PC-9 (cell line): ENCODE measurements at regions of chr14 and their contacts with region 1.

Region 1: GRCh38 chr14:34403643-34404042 is 58.4 kb downstream of the SPTSSA start:
- DNase-seq: no peak
- H3K4me3 ChIP-seq: no peak overlapping the region
- H3K27ac ChIP-seq: no peak overlapping the region
- H3K4me1 ChIP-seq: no peaks in the 10 kb centered on the region
- H3K27me3 ChIP-seq: no peaks in the 10 kb centered on the region
- CTCF ChIP-seq: no peak

Region 2: DNA sequence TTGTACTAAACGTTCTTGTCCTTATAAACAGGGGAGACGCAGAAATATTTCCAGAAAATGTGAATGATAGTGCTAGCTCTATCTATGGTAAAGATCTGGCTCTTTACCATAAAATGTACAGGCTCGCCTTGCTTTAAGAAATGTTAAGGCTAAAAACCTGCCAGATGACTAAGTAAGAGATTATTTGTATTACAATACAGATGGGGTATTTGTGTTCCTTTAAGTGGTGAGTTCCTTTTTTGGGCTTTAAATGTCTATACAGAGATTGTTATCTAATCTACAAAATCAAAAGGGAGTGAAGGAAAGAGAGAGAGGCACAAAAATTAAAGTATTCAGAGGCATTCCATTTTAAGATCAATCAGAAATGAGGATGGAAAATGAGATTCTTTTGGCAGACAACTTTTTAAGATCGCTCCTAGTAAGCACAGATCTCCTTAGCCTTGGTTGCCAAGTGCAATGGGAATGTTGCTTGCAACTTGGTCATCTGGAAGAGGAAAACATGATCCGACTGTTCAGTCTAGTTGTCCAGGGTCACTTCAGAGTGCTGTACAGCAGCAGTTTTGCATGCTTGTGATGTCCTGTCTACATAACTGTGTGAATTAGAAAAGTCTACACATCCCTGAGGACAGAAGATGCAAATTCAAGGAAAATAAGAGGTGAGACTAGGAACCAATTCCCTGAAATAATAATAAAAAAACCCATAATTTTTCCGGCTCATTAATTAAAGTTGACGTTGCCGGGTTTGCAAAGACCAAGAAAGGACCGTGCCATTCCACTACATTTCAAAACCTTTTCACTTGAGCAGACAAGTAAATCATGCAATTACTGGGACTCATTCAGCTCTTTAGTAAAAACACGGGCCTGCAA is 833.6 kb before region 1 on chr14:
- CTCF ChIA-PET with region 1: no interaction called
- POLR2A ChIA-PET with region 1: interaction called, 12 read pairs
- intact Hi-C with region 1: no loop called
- DNase-seq: no peak
- H3K4me3 ChIP-seq: no peak overlapping the region
- H3K27ac ChIP-seq: no peak overlapping the region
- H3K4me1 ChIP-seq: peaks cover 19% of the 10 kb centered on the region
- H3K27me3 ChIP-seq: no peaks in the 10 kb centered on the region
- CTCF ChIP-seq: no peak

Region 3: GRCh38 chr14:34365309-34365915 is 38.2 kb before region 1 on chr14:
- CTCF ChIA-PET with region 1: no interaction called
- POLR2A ChIA-PET with region 1: no interaction called
- intact Hi-C with region 1: no loop called
- DNase-seq: no peak
- H3K4me3 ChIP-seq: no peak overlapping the region
- H3K27ac ChIP-seq: no peak overlapping the region
- H3K4me1 ChIP-seq: peaks cover 48% of the 10 kb centered on the region
- H3K27me3 ChIP-seq: no peaks in the 10 kb centered on the region
- CTCF ChIP-seq: no peak